Left cardiac atrium (tissue), 4 donors: ENCODE measurements at regions of chr2 and their contacts with region 1.

Region 1: GRCh38 chr2:11498543-11499080 is 32.7 kb upstream of the E2F6 start:
- DNase-seq: peak; percentile 85
- ATAC-seq: peak; percentile 95

Region 2: DNA sequence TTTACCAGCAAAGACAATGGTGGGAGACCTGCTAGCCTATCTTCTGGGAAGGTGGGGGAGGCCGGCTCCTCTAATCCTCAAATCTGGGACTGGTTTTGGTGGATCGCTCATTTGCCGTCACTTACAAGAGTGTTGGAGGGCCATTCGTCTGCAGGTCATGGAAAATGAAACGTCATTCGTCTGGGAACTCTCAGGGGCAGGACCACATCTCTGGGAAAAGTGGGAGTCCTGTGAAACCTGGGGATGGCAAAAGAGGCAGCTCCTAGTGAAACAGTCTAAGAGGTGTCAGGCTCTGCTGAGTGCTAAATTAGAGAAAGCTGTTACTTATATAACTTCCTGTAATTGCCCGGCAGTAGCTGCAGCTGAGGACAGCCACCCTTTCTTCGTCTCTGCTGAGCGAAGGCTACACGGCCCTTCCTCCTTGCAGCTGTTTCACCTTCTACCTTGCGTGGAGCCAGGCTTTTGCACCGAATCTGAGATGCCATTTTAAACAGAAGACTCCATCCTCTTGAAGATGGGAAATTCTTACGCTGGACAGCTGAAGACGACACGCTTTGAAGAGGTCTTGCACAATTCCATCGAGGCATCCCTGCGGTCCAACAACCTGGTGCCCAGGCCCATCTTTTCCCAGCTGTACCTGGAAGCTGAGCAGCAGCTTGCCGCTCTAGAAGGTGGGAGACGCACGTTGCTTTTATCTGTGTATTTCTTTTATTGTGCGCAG is 57.6 kb after region 1 on chr2:
- intact Hi-C with region 1: loop called in 1 of 2 experiments (anchors 5 kb)
- DNase-seq: no peak
- ATAC-seq: no peak

Region 3: DNA sequence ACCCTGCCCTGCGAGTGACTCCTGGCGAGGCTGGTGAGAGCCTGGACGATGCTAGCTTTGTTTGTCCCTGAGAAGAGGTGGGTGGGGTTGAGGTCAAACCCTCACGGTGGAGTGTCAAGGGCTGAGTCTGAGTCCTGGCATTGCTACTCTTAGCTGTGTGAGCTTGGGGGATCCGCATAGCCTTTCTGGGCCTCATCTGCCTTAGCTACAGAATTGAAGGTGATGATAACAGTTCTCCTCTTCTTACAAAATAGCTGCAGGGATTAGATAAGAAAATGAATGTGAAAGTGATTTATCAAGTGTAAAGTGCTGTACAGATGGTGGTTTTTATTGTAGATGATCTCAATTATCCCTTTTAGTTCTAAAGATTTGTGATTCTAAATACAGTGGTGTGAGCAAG is 392.4 kb after region 1 on chr2:
- intact Hi-C with region 1: no loop called
- DNase-seq: no peak
- ATAC-seq: peak in 1 of 2 donors; percentile 24